Head of caudate nucleus (tissue), 42 donors: ENCODE measurements at regions of chr7 and their contacts with region 1.

Region 1: GRCh38 chr7:127651556-127652332 is at the start of gene SND1:
- DNase-seq: peak; percentile 96 to 100 (median 99)

Region 2: GRCh38 chr7:127347567-127348246 is 304.0 kb before region 1 on chr7:
- intact Hi-C with region 1: no loop called
- DNase-seq: peak in 40 of 42 donors; percentile 19 to 79 (median 57)

Region 3: DNA sequence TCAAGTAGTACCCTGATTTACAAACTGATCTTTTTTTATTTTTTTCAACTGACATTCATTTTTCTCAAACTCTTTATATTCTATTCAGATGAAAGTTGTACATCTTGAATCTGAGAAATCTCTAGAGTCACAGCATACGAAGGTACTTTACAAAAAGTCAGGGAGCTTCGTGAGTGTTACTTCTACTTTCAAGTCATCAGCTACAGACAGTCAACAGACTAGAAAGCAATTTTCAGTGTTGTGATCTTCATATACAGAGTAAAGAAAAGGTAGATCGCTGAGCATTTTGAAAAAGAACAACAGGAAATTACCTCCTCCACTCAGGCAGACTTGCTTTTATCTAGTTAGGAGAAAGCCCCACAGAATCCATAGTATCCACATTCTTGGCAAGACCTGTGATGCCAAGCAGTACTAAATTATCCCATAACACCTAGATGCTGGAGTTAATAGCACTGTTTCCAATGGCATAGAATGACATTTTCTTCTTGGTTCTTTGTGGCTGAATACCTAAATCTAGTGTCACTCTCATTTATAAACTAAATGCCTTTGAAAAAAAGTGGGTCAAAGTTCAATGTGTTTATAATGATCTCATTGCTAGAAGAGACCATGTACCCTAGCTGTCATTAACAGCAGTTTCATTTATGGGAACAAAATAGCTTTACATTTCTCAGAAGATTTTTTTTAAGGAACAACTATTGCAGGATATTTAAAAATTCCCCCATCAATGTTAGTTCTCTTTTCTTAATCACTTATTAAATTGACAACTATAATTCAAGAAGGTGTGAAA is 247.3 kb before region 1 on chr7:
- intact Hi-C with region 1: no loop called
- DNase-seq: no peak

Region 4: GRCh38 chr7:127585044-127585953 is 66.4 kb before region 1 on chr7 and contains the start of gene GCC1:
- intact Hi-C with region 1: loop called (anchors 5 kb)
- DNase-seq: peak; percentile 85 to 98 (median 95)

Region 5: DNA sequence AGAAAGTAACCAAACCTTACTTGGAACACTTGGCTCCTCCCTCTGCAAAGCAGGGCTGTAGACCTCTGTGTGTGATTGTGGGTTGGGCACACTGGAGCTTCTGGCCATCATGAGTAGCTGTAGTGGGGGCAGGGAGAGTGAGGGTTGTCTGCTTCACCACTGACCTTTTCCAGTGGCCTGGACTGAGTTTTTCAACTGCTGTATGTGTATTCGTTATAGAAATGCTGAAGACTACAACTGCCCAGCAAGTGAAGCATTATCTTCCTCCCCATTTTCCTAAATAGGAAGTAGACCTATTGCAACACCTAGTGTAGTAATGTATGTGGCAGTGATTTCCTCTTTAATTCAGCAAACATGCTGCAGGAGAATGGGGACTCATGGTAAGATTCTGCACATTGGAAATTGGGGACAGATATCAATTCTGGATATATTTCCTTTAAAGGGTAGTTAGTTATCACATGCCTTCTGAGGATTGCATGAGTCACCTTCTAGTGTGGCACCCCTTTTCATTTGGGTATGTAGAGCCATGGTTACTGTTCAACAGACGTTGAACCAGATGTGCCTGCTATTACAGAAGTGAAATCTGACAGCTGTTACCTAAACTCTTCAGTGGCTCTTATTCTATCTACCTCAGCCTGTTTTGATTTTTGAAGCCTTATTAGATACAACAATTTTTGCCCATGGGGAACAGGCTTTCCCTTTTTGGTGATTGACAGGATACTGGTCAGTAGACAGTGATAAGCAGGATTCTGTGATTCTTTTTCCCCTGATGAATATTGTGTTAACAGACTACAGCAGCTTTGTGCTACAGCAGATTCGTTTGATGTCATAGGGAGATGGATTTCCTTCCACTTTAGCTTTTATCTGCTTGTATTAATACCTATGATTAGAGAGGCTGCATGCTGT is 131.2 kb after region 1 on chr7:
- intact Hi-C with region 1: no loop called
- DNase-seq: no peak